Motor neuron (in vitro differentiated cells): ENCODE measurements at regions of chr16 and their contacts with region 1.

Region 1: DNA sequence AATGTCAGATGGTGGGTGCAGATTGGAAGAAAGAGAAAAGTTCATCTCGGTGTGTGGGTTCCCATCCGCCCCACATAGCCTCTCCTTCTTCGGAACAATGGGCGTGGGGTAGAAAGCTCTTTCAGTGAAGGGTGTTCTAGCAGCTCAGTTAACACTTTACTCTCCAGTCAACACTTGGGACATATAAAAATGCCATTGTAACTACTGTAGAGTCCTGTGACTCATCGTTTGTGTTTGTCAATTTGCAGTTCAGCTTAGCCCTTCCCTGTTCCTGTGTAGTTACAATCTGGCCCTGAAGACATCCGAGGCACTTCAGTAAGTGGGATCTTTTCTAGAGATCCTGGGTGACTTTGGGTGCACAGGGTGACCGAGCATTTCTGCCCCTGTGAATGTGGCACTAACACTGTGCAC is 11.5 kb upstream of the CLEC18C start:
- ATAC-seq: peak in 6 of 8 experiments; percentile 11 to 60 (median 26)
- H3K4me3 ChIP-seq: no peak overlapping the region
- H3K27ac ChIP-seq: no peak overlapping the region
- H3K4me1 ChIP-seq: peaks cover 0 to 2% of the 10 kb centered on the region in 2 donors

Region 2: DNA sequence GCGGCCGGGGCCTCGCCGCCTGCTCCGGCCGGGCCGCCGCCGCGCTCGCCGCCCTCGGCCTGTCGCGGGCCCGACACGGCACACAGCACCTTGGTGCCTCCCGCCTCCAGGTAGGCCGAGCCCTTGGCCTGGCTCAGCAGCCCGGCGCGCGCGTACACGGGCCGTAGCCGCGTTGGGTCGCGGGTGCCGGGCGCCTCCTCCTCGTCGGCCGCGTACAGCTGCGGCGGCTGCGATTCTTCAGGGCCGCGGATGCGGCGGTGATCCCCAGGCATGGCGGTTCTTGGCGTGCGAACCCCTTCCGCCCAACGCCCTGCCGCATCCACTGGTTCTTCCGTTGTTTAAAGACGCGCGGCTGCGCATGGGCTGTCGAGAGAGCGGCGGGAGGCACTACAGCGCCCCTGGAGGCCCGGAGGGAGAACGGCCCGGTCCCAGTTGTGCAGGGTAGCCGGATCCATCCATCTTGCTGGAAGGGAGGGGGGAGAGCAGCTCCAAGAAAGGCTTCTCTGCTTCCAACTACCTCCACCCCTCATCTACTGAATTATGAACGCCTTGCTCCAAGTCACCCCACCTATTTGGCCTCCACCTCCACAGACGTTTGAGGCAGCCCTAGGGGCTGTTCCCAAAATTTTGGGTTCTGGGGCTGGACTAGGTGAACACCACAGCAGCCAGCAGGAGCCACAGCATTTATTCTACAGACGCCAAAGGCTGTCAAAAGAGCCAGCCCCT is 89.7 kb after region 1 on chr16 and contains the start of gene EXOSC6:
- in situ Hi-C with region 1: loop called in 1 of 9 experiments (anchors 25 kb)
- ATAC-seq: peak; percentile 73 to 93 (median 89)
- H3K4me3 ChIP-seq: peak within 1 kb of the TSS; percentile 44 to 91 (median 54)
- H3K27ac ChIP-seq: peak within 1 kb of the TSS; percentile 80 to 94
- H3K4me1 ChIP-seq: peaks cover 5 to 13% of the 10 kb centered on the region in 2 donors
- total RNA-seq, gene EXOSC6: 20.6 to 35.2 (median 21.3) TPM

Region 3: DNA sequence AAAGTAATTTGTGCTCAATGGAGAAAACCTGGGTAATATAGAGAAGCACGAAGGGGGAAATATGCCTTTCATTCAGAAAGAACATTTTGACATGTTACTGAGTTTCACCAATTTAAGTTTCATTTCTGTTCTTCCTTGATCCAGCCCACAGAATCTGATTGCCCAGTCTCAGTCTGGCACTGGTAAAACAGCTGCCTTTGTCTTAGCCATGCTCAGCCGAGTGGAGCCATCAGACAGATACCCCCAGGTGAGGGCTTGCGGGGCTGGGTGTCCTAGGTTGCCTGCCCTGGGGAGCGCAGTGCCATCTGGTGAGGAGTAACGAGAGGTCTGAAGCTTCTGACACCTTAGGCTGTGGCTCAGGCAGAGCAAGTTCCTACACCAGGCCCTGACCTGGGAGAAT is 202.4 kb after region 1 on chr16:
- in situ Hi-C with region 1: no loop called
- ATAC-seq: no peak
- H3K4me3 ChIP-seq: no peak overlapping the region
- H3K27ac ChIP-seq: no peak overlapping the region
- H3K4me1 ChIP-seq: no peaks in the 10 kb centered on the region